ENCODE measurements at regions of chr18 and their contacts with region 1.

Region 1: DNA sequence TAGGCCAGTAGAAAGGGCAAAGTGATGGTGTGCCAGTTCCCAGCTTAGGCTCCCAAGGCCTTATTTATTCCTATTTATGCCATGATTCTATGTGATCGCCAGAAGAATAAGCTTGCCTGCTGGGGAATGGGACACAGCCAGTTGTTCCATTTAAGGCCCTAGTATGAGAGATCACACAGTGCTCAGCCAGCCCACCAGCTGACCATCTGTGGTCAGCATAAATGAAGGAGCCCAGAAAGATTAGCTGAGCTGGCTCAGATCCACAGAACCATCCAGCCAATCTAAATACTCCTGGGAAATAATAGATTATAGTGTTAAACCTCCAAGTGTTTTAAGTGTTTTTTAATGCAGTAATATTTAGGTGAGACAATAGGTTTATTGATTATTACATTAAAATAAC is 12.6 kb upstream of the L3MBTL4 start:
- DNase-seq: no peak
- ATAC-seq: no peak

Region 2: GRCh38 chr18:6088432-6088831 is 338.9 kb before region 1 on chr18:
- intact Hi-C with region 1: no loop called
- DNase-seq: no peak
- ATAC-seq: no peak

Region 3: DNA sequence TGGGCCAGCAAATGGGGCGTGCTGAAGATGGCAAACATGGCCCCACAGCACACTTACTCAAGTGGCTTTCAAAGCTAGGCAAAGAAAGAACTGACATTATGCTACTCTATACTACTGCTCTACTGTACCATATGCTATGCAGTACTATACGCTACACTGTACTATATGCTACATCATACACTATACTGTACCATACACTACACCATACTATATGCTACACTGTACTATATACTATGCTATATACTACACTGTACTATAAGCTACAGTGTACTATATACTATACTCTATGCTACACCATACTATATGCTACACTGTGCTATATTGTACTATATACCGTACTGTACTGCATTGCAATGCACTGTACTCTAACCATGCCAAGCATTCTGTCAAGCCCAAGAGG is 288.3 kb before region 1 on chr18:
- intact Hi-C with region 1: loop called in 1 of 2 experiments (anchors 10 kb)
- DNase-seq: no peak
- ATAC-seq: no peak

Region 4: GRCh38 chr18:6441200-6441599 is 13.9 kb after region 1 on chr18:
- intact Hi-C with region 1: no loop called
- DNase-seq: no peak
- ATAC-seq: no peak

Measured in left cardiac atrium (tissue), 4 donors.